ENCODE measurements at regions of chr2 and their contacts with region 1.

Region 1: DNA sequence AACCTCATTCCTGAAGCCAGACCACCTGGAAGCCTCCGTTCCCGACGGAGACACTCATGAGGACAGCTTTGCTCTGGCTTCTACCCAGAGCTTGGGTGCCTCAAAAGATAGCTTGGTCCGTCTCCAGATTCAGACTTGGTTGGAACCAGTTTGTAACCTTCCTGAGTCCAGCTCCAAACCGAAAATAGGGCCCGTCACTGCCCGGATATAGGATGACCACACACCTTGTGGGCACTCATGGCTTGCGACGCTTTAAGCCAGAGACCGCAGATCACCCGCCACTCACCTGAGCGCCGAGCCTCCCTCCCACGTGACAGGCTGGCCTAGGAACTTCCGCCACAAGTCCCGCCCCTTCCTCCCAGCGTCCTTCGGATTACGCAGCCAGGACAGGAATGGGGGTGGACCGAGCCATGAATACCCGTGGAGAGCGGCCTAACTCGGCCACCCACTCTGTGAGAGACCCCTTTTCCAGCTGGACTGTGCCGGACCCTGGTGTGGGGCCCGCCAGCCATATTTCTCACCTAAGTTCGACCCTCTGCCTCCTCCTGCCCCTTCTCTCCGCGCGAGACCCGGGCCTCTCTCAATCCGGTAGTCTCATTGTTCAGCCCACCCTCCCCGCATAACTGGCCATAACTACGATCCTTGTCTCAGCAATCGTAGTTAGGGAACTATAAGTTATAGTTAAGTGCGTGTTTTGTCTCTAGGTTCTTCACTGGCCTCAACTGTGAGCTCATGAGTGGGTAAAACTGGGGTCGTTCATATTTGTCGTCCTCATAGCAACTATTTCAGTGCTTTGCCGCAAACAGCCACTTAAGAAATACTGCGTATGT is at the start of gene MPV17:
- DNase-seq: peak; percentile 89 to 97 (median 93)

Region 2: DNA sequence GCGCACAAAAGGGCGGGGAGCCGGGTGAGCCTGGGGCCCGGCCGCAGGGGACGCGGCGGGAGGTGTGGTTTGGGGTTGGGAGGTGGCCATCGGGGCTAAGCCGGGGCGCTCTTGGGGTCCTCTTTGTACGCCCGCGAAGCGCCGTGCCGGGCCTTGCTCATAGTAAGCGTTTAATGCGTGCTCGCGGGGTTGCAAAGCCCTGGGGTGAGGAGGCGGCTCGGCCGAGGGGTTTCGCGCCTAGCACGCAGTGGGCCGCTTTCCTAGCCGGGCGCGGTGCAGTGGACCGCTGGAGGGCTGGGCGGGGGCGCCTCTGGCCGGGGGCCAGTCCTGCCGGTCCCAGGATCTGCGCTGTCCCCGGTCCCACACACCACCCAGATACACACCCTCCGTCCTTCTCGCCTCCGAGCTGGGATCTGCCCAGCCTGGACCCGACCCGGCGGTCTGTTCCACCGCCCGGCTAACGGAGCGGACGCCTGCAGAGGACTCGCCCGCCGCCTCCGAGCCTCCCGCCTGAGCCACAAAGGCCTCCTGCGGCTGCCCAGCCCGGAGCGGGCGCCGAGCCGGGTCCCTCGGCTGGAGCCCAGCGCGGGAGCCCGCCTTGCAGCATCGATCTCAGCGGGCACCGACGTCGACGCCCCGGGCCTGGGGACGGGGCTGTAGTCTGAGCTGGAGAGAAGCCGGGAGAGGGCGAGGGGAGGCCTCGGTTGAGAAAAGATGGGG is 474.5 kb before region 1 on chr2:
- intact Hi-C with region 1: no loop called
- DNase-seq: peak in 32 of 42 donors; percentile 4 to 65 (median 34)

Region 3: GRCh38 chr2:27356382-27357181 is 33.6 kb after region 1 on chr2 and contains the start of gene GTF3C2:
- intact Hi-C with region 1: loop called (anchors 2 kb)
- DNase-seq: peak; percentile 88 to 98 (median 95)

Region 4: DNA sequence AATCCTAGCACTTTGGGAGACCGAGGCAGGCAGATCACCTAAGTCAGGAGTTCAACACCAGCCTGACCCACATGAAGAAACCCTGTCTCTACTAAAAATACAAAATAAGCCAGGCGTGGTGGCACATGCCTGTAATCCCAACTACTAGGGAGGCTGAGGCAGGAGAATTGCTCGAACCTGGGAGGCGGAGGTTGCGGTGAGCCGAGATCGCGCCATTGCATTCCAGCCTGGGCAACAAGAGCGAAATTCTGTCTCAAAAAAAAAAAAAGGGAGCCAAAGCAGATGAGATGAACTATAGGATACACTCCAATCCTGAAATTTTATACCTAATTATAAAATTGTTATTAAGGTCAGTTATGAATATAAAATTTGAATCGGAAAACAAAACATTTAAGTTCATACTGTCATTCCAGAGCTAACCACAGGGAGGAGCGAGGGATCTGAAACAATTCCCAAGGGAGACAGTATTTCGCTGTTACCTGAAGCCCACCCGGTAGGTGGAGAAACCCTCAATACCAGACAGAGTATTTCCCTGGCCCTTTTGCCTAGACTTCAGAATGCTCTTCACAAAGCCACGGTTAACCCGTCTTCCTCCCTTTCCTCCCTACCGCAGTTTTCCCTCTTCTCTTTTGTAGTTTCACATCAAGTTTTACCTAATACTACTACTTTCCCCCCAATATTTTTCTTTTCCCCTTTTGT is 85.0 kb after region 1 on chr2:
- intact Hi-C with region 1: no loop called
- DNase-seq: peak in 12 of 42 donors; percentile 6 to 43 (median 16)

Region 5: GRCh38 chr2:27453967-27454366 is 131.0 kb after region 1 on chr2:
- intact Hi-C with region 1: no loop called
- DNase-seq: no peak

Region 6: DNA sequence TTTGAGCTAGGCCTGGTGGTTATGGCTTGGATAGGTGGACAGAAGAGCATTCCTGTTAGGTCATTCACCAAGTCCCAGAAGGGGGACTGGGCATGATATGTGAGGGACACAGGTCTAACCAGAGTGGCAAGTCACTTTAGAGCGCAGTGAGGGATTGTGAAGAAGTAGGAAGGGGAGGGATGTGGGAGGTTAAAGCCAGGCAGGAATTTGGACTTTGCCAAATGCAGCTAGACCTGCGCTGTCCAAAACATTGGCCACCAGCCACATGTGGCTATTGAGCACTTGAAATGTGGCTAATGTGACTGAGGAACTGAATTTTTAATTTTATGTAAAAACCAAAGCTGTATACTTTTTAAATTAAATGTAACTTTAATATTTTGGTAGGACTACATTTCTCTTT is 197.3 kb after region 1 on chr2:
- intact Hi-C with region 1: no loop called
- DNase-seq: no peak